BJ (cell line): ENCODE measurements at regions of chr12 and their contacts with region 1.

Region 1: DNA sequence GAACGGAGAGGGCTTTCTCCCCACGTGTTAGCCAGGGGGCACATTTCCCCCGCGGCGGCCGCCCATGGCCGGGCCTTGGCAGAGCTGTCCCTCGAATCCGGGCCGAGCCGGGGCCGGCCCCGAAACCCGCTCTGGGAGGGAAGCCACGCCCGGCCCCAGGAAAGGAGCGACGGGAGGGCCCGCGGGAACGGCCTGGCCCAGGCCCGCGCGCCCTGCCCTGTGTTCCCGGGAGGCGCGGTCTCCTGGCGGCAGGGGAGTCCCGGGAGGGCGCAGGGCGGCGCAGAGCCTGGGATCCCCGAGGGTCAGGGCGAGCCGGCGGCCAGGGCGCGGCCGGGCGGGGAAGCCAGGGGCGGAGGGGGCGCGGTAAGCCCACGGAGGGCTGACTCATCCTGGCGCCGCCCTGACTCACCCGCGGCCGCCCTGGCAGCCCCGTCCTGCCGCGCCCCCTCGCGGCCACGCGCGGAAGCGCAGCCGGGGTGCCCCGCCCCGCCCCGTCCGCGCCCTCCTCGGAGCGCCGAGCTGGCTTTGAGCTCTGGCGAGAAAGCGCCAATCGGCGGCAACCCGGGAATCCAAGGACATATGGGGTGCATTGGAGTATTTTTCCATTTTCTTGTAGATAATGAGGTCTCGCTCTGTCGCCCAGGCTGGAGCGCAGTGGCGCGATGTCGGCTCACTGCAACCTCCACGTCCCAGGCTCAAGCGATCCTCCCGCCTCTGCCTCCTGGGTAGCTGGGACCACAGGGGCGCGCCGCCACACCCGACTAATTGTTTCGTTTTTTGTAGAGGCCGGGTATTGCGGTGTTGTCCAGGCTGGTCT is 31.8 kb upstream of the PLEKHG6 start:
- DNase-seq: no peak
- H3K4me3 ChIP-seq: peak overlapping the region; percentile 36
- H3K27me3 ChIP-seq: no peaks in the 10 kb centered on the region
- CTCF ChIP-seq: peak; percentile 29; the same call in 1 of the 2 replicates

Region 2: GRCh38 chr12:5988659-5989116 is 290.0 kb before region 1 on chr12:
- CTCF ChIA-PET with region 1: interaction called, 97 read pairs
- POLR2A ChIA-PET with region 1: no interaction called
- DNase-seq: no peak
- H3K4me3 ChIP-seq: no peak overlapping the region
- H3K27me3 ChIP-seq: peaks cover 3% of the 10 kb centered on the region
- CTCF ChIP-seq: peak; percentile 99

Region 3: DNA sequence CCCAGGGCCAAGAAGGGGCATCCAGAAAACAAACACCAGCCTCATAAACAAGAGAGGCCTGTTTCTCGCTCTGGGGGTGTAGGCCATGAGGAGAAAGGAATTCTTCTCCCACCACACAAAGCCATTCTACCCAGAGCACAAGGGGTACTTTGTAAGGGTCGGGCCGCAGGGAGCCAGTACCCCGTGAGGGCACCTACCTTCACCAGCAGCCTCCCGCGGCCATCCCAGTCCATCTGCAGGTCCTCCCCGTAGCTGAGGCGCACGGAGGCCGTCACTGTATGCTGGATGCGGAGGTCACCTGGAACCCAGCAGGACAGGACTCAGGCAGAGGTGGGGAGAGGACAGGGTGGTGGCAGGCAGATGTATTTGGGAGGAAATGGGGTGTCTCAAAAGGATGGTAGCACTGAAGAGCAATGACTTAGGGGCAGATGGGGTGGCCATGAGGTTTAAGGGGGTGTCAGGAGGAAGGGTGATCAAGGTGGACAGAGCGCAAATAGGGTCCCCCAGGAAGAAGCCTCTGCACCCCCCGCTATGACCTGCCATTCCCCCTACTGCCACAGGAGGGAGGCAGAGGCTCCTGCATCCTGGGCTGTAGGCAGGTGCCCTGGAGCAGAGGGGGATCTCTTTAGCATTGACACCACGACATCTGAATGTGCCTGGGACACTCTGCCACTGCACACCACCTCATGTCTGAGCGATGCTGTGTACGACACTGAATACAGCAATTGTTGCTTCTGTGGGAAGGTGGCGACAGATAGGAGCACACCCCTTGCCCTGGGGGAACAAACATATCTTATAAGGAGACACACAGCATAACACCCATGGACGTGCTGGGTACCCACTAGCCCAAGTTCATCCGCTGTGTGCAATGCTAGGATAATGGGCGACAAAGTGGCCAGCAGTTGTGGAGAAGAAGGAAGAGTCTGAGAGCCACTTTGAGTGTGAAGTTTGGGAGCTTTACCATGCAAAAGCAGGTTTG is 215.6 kb before region 1 on chr12:
- CTCF ChIA-PET with region 1: interaction called, 38 read pairs
- POLR2A ChIA-PET with region 1: no interaction called
- DNase-seq: no peak
- H3K4me3 ChIP-seq: no peak overlapping the region
- H3K27me3 ChIP-seq: no peaks in the 10 kb centered on the region; the same call in 1 of the 2 replicates
- CTCF ChIP-seq: peak; percentile 98

Region 4: DNA sequence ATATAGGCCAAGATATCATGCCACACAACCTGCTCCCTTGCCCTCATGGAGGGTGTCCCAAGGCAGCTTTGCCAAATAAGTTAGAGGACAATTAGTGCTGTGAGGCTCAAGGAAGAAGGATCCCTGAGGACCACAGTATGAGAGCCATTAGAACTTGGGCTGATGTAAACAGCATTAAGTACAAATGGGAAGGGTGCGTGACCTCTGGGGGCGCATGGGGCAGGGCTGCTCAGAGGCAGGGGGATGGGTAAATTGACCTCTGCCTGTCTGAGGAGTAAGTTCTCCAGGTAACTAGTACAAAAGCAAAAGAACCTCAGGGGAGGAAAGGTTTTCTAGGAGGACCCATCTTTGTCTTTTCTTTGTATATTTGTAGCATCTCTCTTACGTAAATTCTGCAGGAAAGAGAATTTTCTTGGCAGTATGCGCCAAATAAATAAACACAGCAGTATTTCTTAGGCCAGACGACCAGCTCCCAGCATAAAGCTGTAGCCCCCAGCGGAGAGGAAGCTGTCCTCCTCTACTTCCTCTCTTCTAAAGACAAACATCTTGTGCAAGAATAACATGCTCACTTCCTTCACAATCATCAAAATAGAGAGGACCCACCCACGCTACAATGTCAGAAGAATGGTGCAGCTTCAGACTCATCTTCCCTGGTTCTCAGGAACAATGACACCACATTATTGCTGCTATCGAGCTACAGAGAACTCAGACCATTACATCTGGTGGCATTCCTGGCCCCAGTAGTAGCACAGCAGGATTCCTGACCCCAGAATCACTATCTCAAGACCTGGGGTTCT is 137.8 kb before region 1 on chr12:
- CTCF ChIA-PET with region 1: no interaction called
- POLR2A ChIA-PET with region 1: no interaction called
- DNase-seq: no peak
- H3K4me3 ChIP-seq: no peak overlapping the region
- H3K27me3 ChIP-seq: no peaks in the 10 kb centered on the region
- CTCF ChIP-seq: no peak

Region 5: DNA sequence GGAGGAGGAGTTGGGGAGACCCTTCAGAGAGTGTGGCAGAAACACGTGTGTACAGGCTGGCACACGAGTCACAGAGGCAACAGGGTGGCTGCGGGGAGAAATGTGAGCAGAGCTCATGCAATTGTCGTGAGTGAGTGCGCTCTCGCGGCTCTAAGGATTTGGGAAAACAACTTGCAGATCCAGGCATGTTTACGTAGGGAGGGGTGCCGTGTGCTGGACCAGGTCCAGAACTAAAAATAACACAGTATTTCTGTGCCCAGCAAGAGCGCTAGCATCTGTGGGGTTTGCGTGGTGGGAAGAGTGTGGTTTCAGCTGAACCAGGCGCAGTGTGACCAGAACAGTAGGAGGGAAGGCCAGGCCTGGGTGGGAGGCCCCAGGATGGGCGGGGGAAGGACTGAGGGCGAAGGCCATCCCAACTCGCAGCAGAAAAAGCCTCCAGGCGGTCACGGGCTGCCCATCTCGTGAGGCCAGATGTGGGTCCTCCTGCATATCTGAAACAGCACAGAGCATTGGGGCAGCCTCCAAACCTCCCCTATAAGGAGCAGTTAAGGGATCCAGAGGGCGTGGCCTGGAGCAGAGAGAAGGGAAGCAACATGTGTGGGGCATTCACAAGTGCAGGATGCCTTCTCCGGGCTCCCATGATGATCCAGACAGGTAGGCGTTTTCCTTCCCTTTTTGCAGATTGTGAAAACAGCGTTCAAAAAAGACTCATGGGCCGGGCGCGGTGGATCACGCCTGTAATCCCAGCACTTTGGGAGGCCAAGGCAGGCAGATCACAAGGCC is 96.3 kb before region 1 on chr12:
- CTCF ChIA-PET with region 1: interaction called, 19 read pairs
- POLR2A ChIA-PET with region 1: no interaction called
- DNase-seq: peak; percentile 92
- H3K4me3 ChIP-seq: no peak overlapping the region
- H3K27me3 ChIP-seq: no peaks in the 10 kb centered on the region
- CTCF ChIP-seq: no peak

Region 6: GRCh38 chr12:6195665-6196535 is 82.7 kb before region 1 on chr12:
- CTCF ChIA-PET with region 1: interaction called, 202 read pairs
- POLR2A ChIA-PET with region 1: no interaction called
- DNase-seq: no peak
- H3K4me3 ChIP-seq: no peak overlapping the region
- H3K27me3 ChIP-seq: no peaks in the 10 kb centered on the region
- CTCF ChIP-seq: peak; percentile 94

Region 7: DNA sequence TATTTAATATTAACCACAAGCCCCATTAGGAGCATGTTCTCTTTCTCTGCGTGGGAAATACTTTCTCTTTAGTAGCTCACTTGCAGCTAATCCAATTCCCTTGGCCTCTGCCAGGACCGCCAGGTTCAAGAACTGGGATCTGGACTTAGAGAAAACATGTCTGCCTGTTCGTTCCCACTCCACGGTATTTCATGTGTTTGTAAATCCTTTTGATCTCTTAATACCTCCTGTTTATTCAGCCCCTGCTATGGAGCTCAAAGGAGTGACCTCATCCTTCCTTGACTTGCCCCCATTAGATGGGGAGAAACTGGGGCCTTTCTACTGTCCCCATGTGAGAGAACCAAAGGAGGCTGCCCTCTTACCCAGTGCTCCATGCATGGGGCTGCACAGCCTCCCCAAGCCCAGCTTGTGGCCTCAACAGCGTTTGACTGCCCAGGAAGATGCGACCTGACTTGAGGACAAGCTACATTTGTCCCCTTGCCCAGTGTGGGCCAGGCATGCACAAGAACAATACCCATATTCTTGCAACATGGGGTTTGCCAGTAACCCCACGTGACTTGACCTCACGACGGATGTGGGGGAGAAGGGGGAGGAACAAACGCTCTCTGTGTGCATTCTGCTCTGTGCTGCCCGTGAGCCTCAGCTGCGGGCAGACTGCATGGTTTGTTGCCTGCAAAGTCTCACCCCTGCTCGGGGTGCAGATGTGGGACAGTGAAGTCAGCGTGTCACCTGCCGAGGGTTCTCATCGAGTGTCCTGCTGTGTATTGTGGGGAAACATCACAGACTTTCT is 48.1 kb before region 1 on chr12:
- CTCF ChIA-PET with region 1: interaction called, 34 read pairs
- POLR2A ChIA-PET with region 1: no interaction called
- DNase-seq: no peak
- H3K4me3 ChIP-seq: no peak overlapping the region
- H3K27me3 ChIP-seq: no peaks in the 10 kb centered on the region
- CTCF ChIP-seq: no peak

Region 8: GRCh38 chr12:6532051-6532926 is 253.6 kb after region 1 on chr12:
- CTCF ChIA-PET with region 1: no interaction called
- POLR2A ChIA-PET with region 1: no interaction called
- DNase-seq: peak; percentile 92
- H3K4me3 ChIP-seq: peak overlapping the region; percentile 88
- H3K27me3 ChIP-seq: no peaks in the 10 kb centered on the region
- CTCF ChIP-seq: no peak